GM10248 (cell line): ENCODE measurements at regions of chr5 and their contacts with region 1.

Region 1: GRCh38 chr5:6820851-6821479 is 107.7 kb downstream of the TENT4A start:
- DNase-seq: peak; percentile 59
- CTCF ChIP-seq: peak; percentile 46

Region 2: GRCh38 chr5:6772886-6773285 is 48.1 kb before region 1 on chr5:
- CTCF ChIA-PET with region 1: no interaction called
- POLR2A ChIA-PET with region 1: no interaction called
- DNase-seq: no peak
- CTCF ChIP-seq: no peak

Region 3: GRCh38 chr5:6804766-6805501 is 16.0 kb before region 1 on chr5:
- CTCF ChIA-PET with region 1: interaction called, 10 read pairs
- POLR2A ChIA-PET with region 1: no interaction called
- DNase-seq: no peak
- CTCF ChIP-seq: no peak

Region 4: GRCh38 chr5:6849316-6850105 is 28.5 kb after region 1 on chr5:
- CTCF ChIA-PET with region 1: no interaction called
- POLR2A ChIA-PET with region 1: no interaction called
- DNase-seq: no peak
- CTCF ChIP-seq: no peak